Mammary epithelial cell (primary cell): ENCODE measurements at regions of chr17 and their contacts with region 1.

Region 1: GRCh38 chr17:64420143-64420971 is 28.6 kb upstream of the MILR1 start:
- DNase-seq: peak; percentile 68
- H3K4me3 ChIP-seq: no peak overlapping the region
- H3K27ac ChIP-seq: no peak overlapping the region
- H3K4me1 ChIP-seq: no peaks in the 10 kb centered on the region
- H3K27me3 ChIP-seq: no peaks in the 10 kb centered on the region
- CTCF ChIP-seq: peak; percentile 73 to 75

Region 2: GRCh38 chr17:63919311-63919723 is 501.0 kb before region 1 on chr17:
- CTCF ChIA-PET with region 1: no interaction called
- dilution Hi-C with region 1: no loop called
- in situ Hi-C with region 1: no loop called
- intact Hi-C with region 1: loop called (anchors 10 kb)
- DNase-seq: peak; percentile 38
- H3K4me3 ChIP-seq: no peak overlapping the region
- H3K27ac ChIP-seq: no peak overlapping the region
- H3K4me1 ChIP-seq: no peaks in the 10 kb centered on the region
- H3K27me3 ChIP-seq: no peaks in the 10 kb centered on the region
- CTCF ChIP-seq: peak; percentile 66 to 92

Region 3: GRCh38 chr17:64306850-64307463 is 113.4 kb before region 1 on chr17:
- CTCF ChIA-PET with region 1: no interaction called
- dilution Hi-C with region 1: no loop called
- in situ Hi-C with region 1: no loop called
- intact Hi-C with region 1: loop called (anchors 1 kb)
- DNase-seq: peak; percentile 33
- H3K4me3 ChIP-seq: no peak overlapping the region
- H3K27ac ChIP-seq: no peak overlapping the region
- H3K4me1 ChIP-seq: peaks cover 4% of the 10 kb centered on the region
- H3K27me3 ChIP-seq: no peaks in the 10 kb centered on the region
- CTCF ChIP-seq: peak; percentile 73 to 84

Region 4: GRCh38 chr17:64326395-64327054 is 93.8 kb before region 1 on chr17:
- CTCF ChIA-PET with region 1: no interaction called
- dilution Hi-C with region 1: loop called (anchors 5 kb)
- in situ Hi-C with region 1: loop called (anchors 5 kb)
- intact Hi-C with region 1: loop called (anchors 1 kb)
- DNase-seq: peak; percentile 77
- H3K4me3 ChIP-seq: no peak overlapping the region
- H3K27ac ChIP-seq: no peak overlapping the region
- H3K4me1 ChIP-seq: peaks cover 17% of the 10 kb centered on the region
- H3K27me3 ChIP-seq: no peaks in the 10 kb centered on the region
- CTCF ChIP-seq: no peak

Region 5: DNA sequence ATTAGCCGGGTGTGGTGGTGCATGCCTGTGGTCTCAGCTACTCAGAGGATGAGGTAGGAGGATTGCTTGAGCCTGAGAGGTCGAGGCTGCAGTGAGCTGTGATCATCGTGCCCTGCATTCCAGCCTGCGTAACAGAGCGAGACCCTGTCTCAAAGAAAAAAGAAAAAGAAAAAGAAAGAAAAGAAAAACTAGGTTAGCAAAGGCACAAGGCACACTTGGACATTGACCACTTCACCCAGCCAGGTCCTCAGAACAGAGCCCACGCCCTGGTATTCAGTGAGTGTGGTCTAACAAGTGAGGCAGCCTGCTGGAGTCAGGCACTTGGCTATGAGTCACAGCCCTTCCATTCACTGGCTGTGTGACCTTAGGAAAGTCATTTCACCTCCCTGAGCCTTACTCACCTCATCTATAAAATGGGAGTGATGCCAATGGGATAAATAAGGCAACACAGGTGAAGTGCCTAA is 39.0 kb after region 1 on chr17:
- CTCF ChIA-PET with region 1: no interaction called
- dilution Hi-C with region 1: no loop called
- in situ Hi-C with region 1: no loop called
- intact Hi-C with region 1: no loop called
- DNase-seq: peak; percentile 68
- H3K4me3 ChIP-seq: no peak overlapping the region
- H3K27ac ChIP-seq: no peak overlapping the region
- H3K4me1 ChIP-seq: peaks cover 5% of the 10 kb centered on the region
- H3K27me3 ChIP-seq: peaks cover 3% of the 10 kb centered on the region
- CTCF ChIP-seq: no peak

Region 6: DNA sequence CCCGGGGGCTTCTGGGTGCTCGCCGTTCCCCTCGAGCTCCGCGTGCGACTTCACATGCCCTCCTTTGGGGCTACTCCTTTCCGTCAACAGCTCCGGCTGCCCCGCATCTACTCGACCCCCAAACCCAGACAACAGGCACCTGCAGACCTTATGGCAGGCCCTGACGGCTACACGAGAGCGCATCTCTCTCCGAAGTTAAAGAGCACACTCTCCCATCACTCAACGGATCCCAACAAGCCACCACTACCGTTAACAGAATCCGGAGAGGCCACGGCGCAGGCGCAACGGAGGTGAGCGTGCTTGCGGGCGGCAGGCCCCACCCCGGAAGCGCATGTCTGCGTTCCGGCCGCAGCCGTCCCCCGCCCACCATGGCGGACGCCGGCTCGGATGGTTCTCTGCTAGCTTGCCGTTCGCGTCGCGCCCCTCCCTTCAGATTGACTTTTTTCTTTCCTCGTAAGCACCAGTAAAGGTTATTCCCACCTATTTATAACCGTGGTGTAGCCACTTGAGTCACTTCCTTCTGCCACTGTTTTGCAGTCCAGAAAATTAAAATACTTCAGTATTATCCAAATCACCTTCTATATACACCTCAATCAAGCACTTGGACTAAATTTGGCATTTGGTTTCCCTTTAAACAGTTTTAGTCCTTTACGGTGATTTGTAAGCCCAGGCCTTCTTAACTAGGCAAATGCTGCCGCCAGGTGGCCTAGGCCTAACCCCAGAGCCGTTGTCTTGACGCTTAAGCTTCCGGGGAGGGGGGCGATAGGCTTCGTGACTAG is 76.6 kb after region 1 on chr17 and contains the start of gene POLG2:
- CTCF ChIA-PET with region 1: no interaction called
- dilution Hi-C with region 1: loop called (anchors 5 kb)
- in situ Hi-C with region 1: loop called in 1 of 2 experiments (anchors 5 kb)
- intact Hi-C with region 1: loop called (anchors 2 kb)
- DNase-seq: peak; percentile 93
- H3K4me3 ChIP-seq: peak within 1 kb of the TSS; percentile 48 to 77 (median 70)
- H3K27ac ChIP-seq: peak within 1 kb of the TSS; percentile 71
- H3K4me1 ChIP-seq: peaks cover 50% of the 10 kb centered on the region
- H3K27me3 ChIP-seq: no peaks in the 10 kb centered on the region
- CTCF ChIP-seq: peak; percentile 53 to 70
- total RNA-seq, gene POLG2: 3.8 to 17.7 TPM

Region 7: DNA sequence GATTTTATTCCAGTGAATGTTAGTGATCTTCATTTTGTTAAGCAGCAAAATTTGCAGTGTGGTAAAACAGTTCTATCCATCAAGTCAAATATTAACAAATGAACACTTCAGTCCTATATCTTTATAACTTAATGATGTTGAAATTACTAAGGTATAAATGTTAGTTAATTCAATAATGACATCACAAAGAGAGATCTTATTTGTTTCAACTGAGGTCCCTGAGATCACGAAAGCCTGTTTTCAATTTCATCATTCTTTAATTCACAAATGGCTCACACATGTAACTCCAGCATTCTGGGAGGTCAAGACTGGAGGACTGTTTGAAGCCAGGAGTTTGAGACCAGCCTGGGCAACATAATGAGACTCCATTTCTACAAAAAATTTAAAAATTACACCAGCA is 227.9 kb after region 1 on chr17:
- CTCF ChIA-PET with region 1: no interaction called
- dilution Hi-C with region 1: no loop called
- in situ Hi-C with region 1: no loop called
- intact Hi-C with region 1: loop called (anchors 2 kb)
- DNase-seq: no peak
- H3K4me3 ChIP-seq: no peak overlapping the region
- H3K27ac ChIP-seq: no peak overlapping the region
- H3K4me1 ChIP-seq: peaks cover 21% of the 10 kb centered on the region
- H3K27me3 ChIP-seq: no peaks in the 10 kb centered on the region
- CTCF ChIP-seq: no peak

Region 8: DNA sequence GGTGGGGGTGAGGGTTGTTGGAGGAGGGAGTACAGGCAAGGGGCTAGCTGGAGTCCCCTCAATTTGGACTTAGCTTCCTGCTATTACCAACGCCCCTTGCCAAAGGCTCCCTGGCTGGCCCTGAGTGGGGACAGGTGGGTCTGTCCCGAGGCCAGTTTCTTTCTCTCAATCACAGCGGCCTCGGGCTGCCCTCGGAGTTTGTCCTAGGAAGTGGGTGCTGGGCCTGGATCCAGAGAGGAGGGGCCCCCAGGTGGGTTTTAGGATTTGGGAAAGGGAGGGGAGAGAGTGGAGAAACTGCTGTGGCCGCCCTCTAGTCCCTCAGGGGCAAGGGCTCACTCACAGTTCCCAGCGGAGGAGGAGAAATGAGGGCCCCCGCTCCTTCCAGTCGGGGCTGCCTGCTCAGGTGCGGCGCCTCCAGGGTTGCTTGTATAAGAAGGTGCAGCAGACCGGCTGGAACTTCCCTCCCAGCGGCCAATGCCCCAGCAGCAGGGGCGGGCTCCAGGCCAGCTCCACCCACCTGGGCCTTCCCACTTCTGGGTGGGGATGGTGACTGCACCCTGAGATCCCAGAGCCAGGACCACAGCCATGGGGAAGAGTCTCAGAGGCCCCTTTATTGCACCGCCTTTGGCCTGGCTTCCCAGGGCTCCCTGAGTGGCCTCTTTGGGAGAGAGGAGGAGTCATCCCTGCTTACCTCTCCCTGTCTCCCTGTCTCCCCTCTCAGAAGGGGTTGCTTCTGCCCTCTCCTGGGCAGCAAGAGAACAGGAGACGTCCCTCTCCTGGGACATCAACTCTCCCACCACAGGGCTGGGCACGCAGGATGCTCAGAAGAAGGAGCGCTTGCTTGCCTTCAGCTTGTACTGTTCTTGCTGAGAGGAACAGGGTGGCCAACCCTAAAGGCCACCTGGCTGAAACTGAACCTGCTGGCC is 353.7 kb after region 1 on chr17:
- CTCF ChIA-PET with region 1: no interaction called
- dilution Hi-C with region 1: no loop called
- in situ Hi-C with region 1: no loop called
- intact Hi-C with region 1: loop called (anchors 1 kb)
- DNase-seq: peak; percentile 83
- H3K4me3 ChIP-seq: peak overlapping the region; percentile 41 to 50 (median 49)
- H3K27ac ChIP-seq: peak overlapping the region; percentile 54
- H3K4me1 ChIP-seq: peaks cover 17% of the 10 kb centered on the region
- H3K27me3 ChIP-seq: no peaks in the 10 kb centered on the region
- CTCF ChIP-seq: peak; percentile 53 to 66